Activated T-helper 2 cell treated with anti-CD3 and anti-CD28 coated beads, Interferon-gamma antibody, Interleukin-2, Interleukin-4, amounts not matched to agents 10 μg/mL and 5 μg/mL and 100 μg/mL, durations not matched to agents 14 hours and 24 hours and 36 hours (primary cell): ENCODE measurements at regions of chr2 and their contacts with region 1.

Region 1: GRCh38 chr2:177392373-177393202 is at the start of gene AGPS:
- DNase-seq: peak; percentile 79
- H3K4me3 Mint-ChIP-seq: peak within 1 kb of the TSS; percentile 96
- H3K27ac Mint-ChIP-seq: peak within 1 kb of the TSS; percentile 94
- H3K4me1 Mint-ChIP-seq: peaks cover 63% of the 10 kb centered on the region
- H3K27me3 Mint-ChIP-seq: no peaks in the 10 kb centered on the region
- total RNA-seq, gene AGPS: 70.4 and 74.4 TPM in 2 replicates

Region 2: DNA sequence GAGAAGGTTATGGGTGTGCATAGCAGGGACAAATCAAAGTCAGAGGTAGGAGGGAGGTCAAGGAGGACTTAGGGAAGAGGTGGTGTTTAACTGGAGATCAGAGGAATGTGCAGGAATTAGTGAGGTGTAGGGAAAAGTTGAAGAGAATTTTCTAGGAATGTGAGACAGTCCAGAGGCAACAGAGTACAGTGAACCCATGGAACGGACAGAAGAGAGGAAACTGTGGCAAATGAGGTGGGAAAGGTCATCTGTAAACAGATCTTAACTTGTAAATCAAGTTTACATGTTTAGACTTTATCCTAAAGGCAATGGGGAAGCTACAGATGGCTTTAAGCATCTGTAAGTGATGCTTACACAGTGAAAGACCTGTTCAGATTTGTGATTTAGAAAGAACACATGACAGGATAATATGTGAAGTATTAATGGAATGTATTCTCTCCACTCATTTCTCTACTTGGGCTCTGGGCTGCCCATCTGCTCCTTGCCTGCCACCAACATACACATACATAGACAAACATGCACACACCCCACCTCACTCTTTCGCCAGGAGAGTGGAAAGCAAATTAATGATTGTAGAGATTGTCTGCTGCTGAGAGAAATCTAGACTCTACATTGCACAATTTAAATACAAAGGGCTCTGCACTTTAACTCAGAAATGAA is 67.2 kb before region 1 on chr2:
- intact Hi-C with region 1: no loop called
- DNase-seq: no peak
- H3K4me3 Mint-ChIP-seq: no peak overlapping the region
- H3K27ac Mint-ChIP-seq: no peak overlapping the region
- H3K4me1 Mint-ChIP-seq: peaks cover 7% of the 10 kb centered on the region
- H3K27me3 Mint-ChIP-seq: no peaks in the 10 kb centered on the region

Region 3: GRCh38 chr2:177405029-177405692 is 12.6 kb after region 1 on chr2:
- intact Hi-C with region 1: no loop called
- DNase-seq: no peak
- H3K4me3 Mint-ChIP-seq: no peak overlapping the region
- H3K27ac Mint-ChIP-seq: no peak overlapping the region
- H3K4me1 Mint-ChIP-seq: peaks cover 26% of the 10 kb centered on the region
- H3K27me3 Mint-ChIP-seq: no peaks in the 10 kb centered on the region

Region 4: DNA sequence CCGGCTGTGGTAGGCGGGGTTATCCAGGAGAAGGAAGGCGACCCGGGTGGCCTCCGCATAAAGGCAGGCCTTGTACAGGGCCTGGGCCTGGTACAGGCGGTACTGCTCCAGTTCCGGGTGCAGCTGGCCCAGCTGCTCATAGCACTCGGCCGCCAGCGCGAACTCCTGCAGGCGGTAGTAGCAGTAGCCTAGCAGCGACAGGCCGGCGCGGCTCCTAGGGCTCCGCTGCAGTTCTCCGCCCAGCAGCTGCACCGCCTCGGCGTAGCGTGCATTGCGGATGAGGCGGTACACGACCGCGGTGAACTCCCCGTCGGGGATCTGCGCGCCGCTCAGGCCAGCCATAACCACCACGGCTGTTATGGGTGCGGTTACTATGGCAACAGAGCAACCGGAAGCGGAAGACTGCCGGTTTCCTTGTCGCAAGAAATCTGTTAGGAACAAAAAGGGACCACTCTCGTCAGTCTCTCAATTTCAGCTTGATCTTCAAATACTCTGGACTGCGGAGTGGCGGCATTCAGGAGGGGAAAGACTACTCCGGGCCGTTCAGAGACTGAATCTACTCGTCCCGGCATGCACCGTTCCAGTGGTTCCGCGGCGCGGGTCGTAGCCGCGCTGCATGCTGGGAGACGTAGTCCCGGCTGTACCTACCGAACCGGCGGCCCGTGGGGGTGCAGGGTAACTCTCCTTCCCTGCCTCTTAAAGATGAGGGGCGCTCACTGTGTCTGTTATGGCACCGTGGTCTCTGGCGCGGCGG is 160.0 kb after region 1 on chr2:
- intact Hi-C with region 1: loop called (anchors 2 kb)
- DNase-seq: peak; percentile 89
- H3K4me3 Mint-ChIP-seq: peak overlapping the region; percentile 91
- H3K27ac Mint-ChIP-seq: peak overlapping the region; percentile 97
- H3K4me1 Mint-ChIP-seq: peaks cover 12% of the 10 kb centered on the region
- H3K27me3 Mint-ChIP-seq: peaks cover 1% of the 10 kb centered on the region

Region 5: GRCh38 chr2:177641331-177641730 is 248.7 kb after region 1 on chr2:
- intact Hi-C with region 1: no loop called
- DNase-seq: no peak
- H3K4me3 Mint-ChIP-seq: no peak overlapping the region
- H3K27ac Mint-ChIP-seq: no peak overlapping the region
- H3K4me1 Mint-ChIP-seq: no peaks in the 10 kb centered on the region
- H3K27me3 Mint-ChIP-seq: peaks cover 18% of the 10 kb centered on the region